IMR-90 (cell line): ENCODE measurements at regions of chr1 and their contacts with region 1.

Region 1: GRCh38 chr1:53485478-53486394 is 26.5 kb downstream of the DMRTB1 start:
- DNase-seq: peak; percentile 76
- ATAC-seq: peak; percentile 97
- H3K4me3 ChIP-seq: no peak overlapping the region
- H3K27ac ChIP-seq: no peak overlapping the region
- H3K4me1 ChIP-seq: no peaks in the 10 kb centered on the region; the same call in 1 of the 2 replicates
- H3K27me3 ChIP-seq: peaks cover 43% of the 10 kb centered on the region
- CTCF ChIP-seq: peak; percentile 98
- POLR2A ChIP-seq: peak; percentile 46; the same call in 1 of the 2 replicates
- RAD21 ChIP-seq: peak; percentile 99

Region 2: DNA sequence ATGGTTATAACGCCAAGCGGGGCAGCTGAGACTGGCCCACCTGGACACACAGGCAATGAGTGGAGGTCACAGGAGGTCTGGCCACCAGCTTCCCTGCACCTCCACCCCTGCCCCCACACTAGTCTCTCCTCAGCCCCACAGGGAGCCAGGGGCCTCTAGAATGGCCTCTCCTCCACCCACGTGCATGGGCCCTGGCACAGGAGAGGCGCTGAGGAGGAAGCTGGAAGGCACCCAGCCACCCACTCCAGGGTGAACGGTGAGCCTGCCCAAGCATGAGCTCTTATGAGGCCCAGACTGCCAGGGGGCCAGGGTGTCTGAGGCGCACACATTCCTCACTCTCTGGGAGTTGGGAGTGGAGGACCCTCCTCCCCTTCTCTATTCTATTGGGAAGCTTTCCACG is 180.1 kb before region 1 on chr1:
- CTCF ChIA-PET with region 1: no interaction called
- POLR2A ChIA-PET with region 1: no interaction called
- dilution Hi-C with region 1: no loop called
- in situ Hi-C with region 1: no loop called
- intact Hi-C with region 1: no loop called
- DNase-seq: no peak
- ATAC-seq: no peak
- H3K4me3 ChIP-seq: no peak overlapping the region
- H3K27ac ChIP-seq: no peak overlapping the region
- H3K4me1 ChIP-seq: peaks cover 3% of the 10 kb centered on the region; the same call in 1 of the 2 replicates
- H3K27me3 ChIP-seq: no peaks in the 10 kb centered on the region
- CTCF ChIP-seq: no peak
- POLR2A ChIP-seq: no peak
- RAD21 ChIP-seq: no peak

Region 3: GRCh38 chr1:53685272-53686051 is 199.7 kb after region 1 on chr1:
- CTCF ChIA-PET with region 1: no interaction called
- POLR2A ChIA-PET with region 1: no interaction called
- dilution Hi-C with region 1: no loop called
- in situ Hi-C with region 1: no loop called
- intact Hi-C with region 1: loop called (anchors 5 kb)
- DNase-seq: peak; percentile 45
- ATAC-seq: peak; percentile 85
- H3K4me3 ChIP-seq: no peak overlapping the region
- H3K27ac ChIP-seq: peak overlapping the region; percentile 18
- H3K4me1 ChIP-seq: peaks cover 24% of the 10 kb centered on the region
- H3K27me3 ChIP-seq: no peaks in the 10 kb centered on the region
- CTCF ChIP-seq: no peak
- POLR2A ChIP-seq: no peak
- RAD21 ChIP-seq: no peak

Region 4: DNA sequence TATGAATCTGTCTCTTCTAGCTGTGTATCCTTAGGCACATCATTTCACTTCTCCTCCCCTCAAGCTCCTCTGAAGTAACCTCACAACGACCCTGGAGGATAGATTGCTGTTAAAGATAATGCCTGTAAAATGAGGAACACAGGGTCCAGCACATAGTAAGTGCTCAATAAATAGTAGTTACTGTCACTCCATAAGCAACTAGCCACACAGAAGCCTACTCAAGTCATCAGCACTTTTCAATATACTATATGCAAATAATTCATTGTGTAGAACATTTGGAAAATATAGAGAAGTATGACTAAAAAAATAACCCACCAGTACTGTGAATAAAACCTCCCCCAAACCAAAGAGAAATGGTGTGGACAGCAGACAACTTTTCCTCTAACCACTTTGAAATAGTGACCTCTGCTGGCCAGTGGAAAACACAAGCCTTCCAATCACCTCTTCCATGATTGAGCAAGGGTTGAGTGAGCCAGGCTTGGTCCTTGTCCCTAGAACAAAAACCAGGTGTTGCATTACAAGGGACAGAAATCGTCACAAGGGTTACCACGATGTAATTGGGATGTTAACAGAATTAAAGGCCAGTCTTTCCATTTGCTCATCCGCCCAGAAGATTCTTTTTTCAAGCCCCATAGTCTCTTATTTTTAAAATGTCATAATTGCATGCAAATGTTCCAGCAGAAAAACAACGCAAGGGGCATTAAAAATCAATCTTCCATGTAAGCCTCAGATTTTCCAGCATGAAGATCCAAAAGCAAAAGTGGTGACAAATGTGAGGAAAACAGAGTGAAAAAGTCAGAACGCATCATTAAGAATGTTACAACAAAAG is 269.0 kb after region 1 on chr1:
- CTCF ChIA-PET with region 1: interaction called, 12 read pairs
- POLR2A ChIA-PET with region 1: no interaction called
- dilution Hi-C with region 1: no loop called
- in situ Hi-C with region 1: loop called (anchors 5 kb)
- intact Hi-C with region 1: loop called (anchors 1 kb)
- DNase-seq: peak; percentile 77
- ATAC-seq: peak; percentile 91
- H3K4me3 ChIP-seq: no peak overlapping the region
- H3K27ac ChIP-seq: no peak overlapping the region
- H3K4me1 ChIP-seq: no peaks in the 10 kb centered on the region
- H3K27me3 ChIP-seq: peaks cover 3% of the 10 kb centered on the region; the same call in 1 of the 2 replicates
- CTCF ChIP-seq: peak; percentile 84
- POLR2A ChIP-seq: no peak
- RAD21 ChIP-seq: peak; percentile 92

Region 5: GRCh38 chr1:53826367-53826766 is 340.6 kb after region 1 on chr1:
- CTCF ChIA-PET with region 1: no interaction called
- POLR2A ChIA-PET with region 1: no interaction called
- dilution Hi-C with region 1: no loop called
- in situ Hi-C with region 1: no loop called
- intact Hi-C with region 1: loop called (anchors 5 kb)
- DNase-seq: peak; percentile 43
- ATAC-seq: peak; percentile 53
- H3K4me3 ChIP-seq: no peak overlapping the region
- H3K27ac ChIP-seq: no peak overlapping the region
- H3K4me1 ChIP-seq: peaks cover 2% of the 10 kb centered on the region; the same call in 1 of the 2 replicates
- H3K27me3 ChIP-seq: no peaks in the 10 kb centered on the region
- CTCF ChIP-seq: 0 out of 2 replicates have a peak, but pooled peaks have one; percentile 29
- POLR2A ChIP-seq: no peak
- RAD21 ChIP-seq: 0 out of 2 replicates have a peak, but pooled peaks have one; percentile 17

Region 6: DNA sequence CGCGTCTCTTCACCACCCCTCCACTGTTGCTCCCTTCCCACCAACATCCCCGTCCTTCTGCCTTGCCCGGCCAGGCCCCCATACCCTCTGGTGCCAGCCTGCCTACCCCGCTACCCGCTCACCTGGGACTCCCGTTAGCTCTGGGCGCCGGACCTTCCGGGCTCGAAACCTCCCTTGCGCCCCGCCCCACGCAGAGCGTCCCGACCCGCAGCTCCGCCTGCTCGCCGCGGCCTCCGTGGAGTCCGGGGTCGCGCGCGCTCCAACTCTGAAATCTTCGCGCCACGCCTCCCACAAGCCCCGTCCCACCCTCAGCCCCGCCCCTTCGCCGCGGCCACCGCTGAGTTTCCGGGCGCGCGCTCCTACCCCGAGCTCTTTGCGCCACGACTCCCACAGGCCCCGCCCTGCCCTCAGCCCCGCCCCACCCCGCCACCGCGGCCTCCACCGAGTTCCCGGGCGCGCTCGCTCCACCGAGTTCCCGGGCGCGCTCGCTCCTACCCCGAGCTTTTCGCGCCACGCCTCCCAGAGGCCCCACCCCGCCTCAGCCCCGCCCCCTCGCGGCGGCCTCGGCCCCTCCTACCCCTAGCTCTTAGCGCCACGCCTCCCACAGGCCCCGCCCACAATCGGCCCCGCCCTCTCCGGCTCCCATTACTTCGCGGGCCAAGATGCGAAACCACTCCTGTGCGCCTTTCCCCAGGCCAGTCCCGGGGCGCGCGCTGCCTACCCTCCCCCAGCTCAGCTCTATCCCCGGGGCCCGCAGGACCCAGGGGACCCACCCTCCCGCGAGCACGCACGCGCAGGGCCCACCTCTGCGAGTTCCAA is 459.9 kb after region 1 on chr1 and contains the start of gene IFT25:
- CTCF ChIA-PET with region 1: no interaction called
- POLR2A ChIA-PET with region 1: no interaction called
- dilution Hi-C with region 1: no loop called
- in situ Hi-C with region 1: no loop called
- intact Hi-C with region 1: loop called (anchors 5 kb)
- DNase-seq: peak; percentile 93
- ATAC-seq: peak; percentile 89
- H3K4me3 ChIP-seq: peak within 1 kb of the TSS; percentile 100
- H3K27ac ChIP-seq: peak within 1 kb of the TSS; percentile 98
- H3K4me1 ChIP-seq: peaks cover 10% of the 10 kb centered on the region
- H3K27me3 ChIP-seq: no peaks in the 10 kb centered on the region
- CTCF ChIP-seq: no peak
- POLR2A ChIP-seq: peak; percentile 47
- RAD21 ChIP-seq: no peak; the same call in 1 of the 2 replicates
- total RNA-seq, gene IFT25: 9.1 and 30.0 TPM in 2 replicates